Activated CD8-positive, alpha-beta T cell treated with anti-CD3 and anti-CD28 coated beads for 36 hours (primary cell): ENCODE measurements at regions of chr10 and their contacts with region 1.

Region 1: DNA sequence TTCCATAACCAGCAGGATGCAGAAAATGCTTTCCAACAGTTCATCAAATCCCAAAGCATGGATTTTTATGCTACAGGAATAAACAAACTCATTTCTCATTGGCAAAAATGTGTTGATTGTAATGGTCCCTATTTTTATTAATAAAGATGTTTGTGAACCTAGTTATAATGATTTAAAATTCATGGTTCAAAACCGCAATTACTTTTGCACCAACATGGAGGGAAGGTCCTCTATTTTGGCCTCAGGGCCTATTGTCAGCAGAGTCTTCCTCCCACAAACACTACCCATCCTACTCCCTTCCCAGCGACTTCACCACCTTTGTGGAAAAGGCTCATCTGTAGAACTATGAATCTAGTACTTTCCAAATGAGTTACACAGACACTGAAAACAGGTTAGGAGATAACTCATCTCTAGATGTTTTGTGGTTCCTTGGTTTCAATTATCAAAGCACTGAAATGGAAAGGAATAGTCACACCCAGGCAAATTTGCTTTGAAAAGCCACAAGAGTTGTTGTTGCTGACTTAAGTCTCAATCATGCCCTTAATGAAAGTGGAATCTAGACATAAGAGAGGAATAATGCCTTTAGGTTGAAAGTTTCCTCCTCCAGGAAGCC is 59.4 kb upstream of the FRMD4A start:
- DNase-seq: peak; percentile 65
- ATAC-seq: peak; percentile 85
- H3K4me3 Mint-ChIP-seq: no peak overlapping the region
- H3K27ac Mint-ChIP-seq: no peak overlapping the region
- H3K4me1 Mint-ChIP-seq: peaks cover 34% of the 10 kb centered on the region
- H3K27me3 Mint-ChIP-seq: peaks cover 19% of the 10 kb centered on the region
- CTCF ChIP-seq: no peak

Region 2: DNA sequence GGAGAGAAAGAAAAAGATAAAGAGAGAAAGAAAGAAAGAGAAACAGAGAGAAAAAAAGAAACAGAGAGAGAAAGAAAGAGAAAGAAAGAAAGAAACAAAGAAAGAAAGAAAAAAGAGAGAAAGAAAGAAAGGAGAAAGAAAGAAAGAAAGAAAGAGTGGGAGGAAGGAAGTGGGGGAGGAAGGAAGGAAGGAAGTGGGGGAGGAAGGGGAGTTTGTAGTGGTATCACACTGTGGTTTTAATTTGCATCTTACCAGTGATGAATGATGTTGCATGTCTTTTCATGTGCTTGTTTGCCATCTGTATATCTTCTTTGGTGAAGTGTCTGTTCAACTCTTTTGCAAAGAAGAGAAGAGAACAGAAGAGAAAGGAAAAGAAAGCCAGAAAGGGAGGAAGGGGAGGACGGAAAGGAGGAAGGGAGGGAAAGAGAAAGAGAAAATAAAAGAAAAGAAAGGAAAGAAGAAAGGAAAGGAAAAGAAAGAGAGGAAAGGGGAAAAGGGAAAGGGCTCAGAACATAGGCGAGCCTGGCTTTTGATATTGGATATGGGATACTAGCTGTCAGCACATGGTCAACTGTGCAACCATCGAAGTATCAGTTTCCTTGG is 19.9 kb after region 1 on chr10:
- CTCF ChIA-PET with region 1: interaction called, 3 read pairs
- POLR2A ChIA-PET with region 1: interaction called, 3 read pairs
- intact Hi-C with region 1: loop called (anchors 1 kb)
- DNase-seq: no peak
- ATAC-seq: no peak
- H3K4me3 Mint-ChIP-seq: no peak overlapping the region
- H3K27ac Mint-ChIP-seq: peak overlapping the region; percentile 53
- H3K4me1 Mint-ChIP-seq: peaks cover 24% of the 10 kb centered on the region
- H3K27me3 Mint-ChIP-seq: peaks cover 47% of the 10 kb centered on the region
- CTCF ChIP-seq: no peak